ENCODE measurements at regions of chrX and their contacts with region 1.

Region 1: DNA sequence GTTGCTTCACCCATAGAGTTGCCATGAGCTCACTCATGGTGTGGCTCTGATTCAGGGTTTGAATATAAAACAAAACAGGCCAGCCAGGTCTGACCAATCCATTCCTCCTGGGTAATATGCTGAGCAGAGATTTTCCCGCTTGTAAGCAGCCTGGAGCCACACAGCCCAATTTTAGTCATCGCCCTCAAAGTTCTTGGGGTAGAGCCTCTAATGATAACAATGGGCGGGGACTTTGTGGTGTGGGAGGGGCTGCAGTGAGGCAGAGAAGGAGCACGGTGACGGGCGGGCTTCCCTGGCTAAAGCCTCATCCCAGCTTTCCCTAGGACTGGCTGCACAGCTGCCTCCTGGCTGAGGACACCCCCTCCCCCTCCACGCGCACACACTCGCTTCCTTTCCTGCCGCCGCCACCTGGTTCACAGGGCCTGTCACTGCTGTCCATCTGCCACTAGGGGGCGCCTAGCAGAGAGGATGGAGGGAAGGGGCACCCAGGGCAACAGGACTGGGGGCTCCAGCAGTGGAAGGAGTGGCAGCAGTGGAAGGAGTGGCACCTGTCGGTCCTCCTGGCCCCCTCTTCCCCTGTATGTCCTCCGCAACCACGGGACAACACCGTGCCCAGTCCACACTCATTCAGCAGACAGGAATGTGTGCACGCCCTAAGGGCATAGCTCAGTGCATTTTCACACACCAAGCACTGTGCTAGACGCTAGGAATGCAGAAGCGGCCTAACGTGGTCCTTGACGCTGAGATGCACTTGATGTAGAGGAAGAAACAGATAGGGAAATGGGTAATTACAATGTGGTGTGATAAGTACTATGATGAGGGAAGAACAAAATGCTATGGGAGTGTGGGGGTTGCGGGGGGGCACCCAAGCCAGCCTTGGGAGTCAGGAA is 26.8 kb downstream of the PRPS1 start:
- DNase-seq: peak; percentile 59
- H3K4me3 ChIP-seq: no peak overlapping the region
- H3K27ac ChIP-seq: no peak overlapping the region
- H3K4me1 ChIP-seq: no peaks in the 10 kb centered on the region
- H3K27me3 ChIP-seq: no peaks in the 10 kb centered on the region
- CTCF ChIP-seq: peak; percentile 53

Region 2: GRCh38 chrX:107448998-107449835 is 205.9 kb before region 1 on chrX and contains the start of gene FRMPD3:
- intact Hi-C with region 1: no loop called
- DNase-seq: no peak
- H3K4me3 ChIP-seq: peak within 1 kb of the TSS; percentile 15
- H3K27ac ChIP-seq: no peak within 1 kb of the TSS
- H3K4me1 ChIP-seq: no peaks in the 10 kb centered on the region
- H3K27me3 ChIP-seq: peaks cover 7% of the 10 kb centered on the region
- CTCF ChIP-seq: no peak
- total RNA-seq, gene FRMPD3: 0.13 to 0.42 TPM

Region 3: GRCh38 chrX:107753187-107753586 is 98.1 kb after region 1 on chrX:
- intact Hi-C with region 1: no loop called
- DNase-seq: no peak
- H3K4me3 ChIP-seq: no peak overlapping the region
- H3K27ac ChIP-seq: no peak overlapping the region
- H3K4me1 ChIP-seq: no peaks in the 10 kb centered on the region
- H3K27me3 ChIP-seq: no peaks in the 10 kb centered on the region
- CTCF ChIP-seq: no peak

Region 4: DNA sequence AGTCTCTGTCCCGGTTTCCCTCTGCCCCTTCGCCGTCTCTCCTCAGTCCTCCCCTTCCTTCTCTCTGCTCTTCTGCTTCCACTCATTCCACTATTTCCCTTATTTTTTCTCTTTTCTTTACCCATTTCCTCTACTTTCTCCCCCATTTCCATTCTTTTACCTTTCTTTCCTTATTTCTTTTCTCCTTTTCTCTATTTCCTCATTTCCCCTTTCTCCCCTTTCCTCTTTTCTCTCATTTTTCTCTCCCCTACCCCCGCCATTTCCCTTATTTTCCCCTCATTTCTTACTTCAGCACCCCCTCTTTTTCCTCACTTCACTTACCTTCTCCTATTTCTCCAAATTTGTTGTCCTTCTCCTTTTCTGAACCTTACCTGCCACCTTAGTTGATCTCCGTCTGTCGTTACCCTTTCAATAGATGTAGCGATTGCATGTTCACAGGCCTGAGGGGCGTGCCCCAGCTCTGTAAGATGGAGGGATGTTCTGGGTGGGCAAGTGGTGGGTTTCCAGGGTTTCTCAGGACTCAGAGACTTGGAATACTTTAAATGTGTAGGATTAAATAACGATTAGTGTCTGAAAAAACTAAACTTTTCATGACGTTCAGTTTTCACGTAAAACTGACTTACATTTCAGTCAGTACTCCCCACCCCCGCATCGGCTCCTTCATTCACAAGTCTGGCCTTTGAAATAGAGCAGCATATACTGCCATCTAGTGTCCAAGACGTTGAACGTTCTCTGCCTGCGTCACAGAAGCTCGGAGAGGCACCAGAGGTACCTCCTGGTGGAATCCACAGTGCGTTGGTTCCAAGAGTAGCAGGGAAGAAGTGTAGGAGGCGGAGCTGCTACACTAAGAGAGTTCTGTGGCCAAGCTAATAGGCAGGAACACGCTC is 121.8 kb after region 1 on chrX:
- intact Hi-C with region 1: no loop called
- DNase-seq: peak; percentile 78
- H3K4me3 ChIP-seq: peak overlapping the region; percentile 41
- H3K27ac ChIP-seq: no peak overlapping the region
- H3K4me1 ChIP-seq: no peaks in the 10 kb centered on the region
- H3K27me3 ChIP-seq: peaks cover 4% of the 10 kb centered on the region
- CTCF ChIP-seq: peak; percentile 77

Region 5: GRCh38 chrX:107894038-107894437 is 238.9 kb after region 1 on chrX:
- intact Hi-C with region 1: loop called (anchors 5 kb)
- DNase-seq: peak; percentile 35
- H3K4me3 ChIP-seq: no peak overlapping the region
- H3K27ac ChIP-seq: no peak overlapping the region
- H3K4me1 ChIP-seq: no peaks in the 10 kb centered on the region
- H3K27me3 ChIP-seq: no peaks in the 10 kb centered on the region
- CTCF ChIP-seq: peak; percentile 57

Measured in colonic mucosa (tissue), 4 donors.